ENCODE measurements at regions of chr12 and their contacts with region 1.

Region 1: DNA sequence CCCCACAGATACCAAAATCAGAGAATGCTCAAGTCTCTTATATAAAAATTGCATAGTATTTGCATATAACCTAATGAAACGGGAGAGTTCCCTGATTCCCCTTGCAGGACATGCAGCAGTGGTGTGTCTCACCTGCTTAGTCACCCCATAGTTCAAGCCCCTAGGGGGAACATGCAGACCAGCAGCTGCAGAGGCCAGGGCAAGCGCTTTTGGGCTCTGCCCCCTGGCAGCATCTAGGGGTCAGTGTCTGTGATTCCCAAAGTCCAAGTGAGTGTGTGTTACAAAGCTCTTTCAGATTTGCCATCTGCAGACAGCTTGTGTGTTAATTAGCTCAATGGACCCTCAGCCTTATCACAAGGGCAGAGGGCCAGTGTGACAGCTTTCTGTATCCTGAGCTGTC is 110.1 kb downstream of the DNAI7 start:
- DNase-seq: no peak
- ATAC-seq: no peak
- H3K4me3 ChIP-seq: no peak overlapping the region
- H3K27ac ChIP-seq: no peak overlapping the region
- H3K4me1 ChIP-seq: no peaks in the 10 kb centered on the region
- H3K27me3 ChIP-seq: no peaks in the 10 kb centered on the region
- CTCF ChIP-seq: no peak

Region 2: DNA sequence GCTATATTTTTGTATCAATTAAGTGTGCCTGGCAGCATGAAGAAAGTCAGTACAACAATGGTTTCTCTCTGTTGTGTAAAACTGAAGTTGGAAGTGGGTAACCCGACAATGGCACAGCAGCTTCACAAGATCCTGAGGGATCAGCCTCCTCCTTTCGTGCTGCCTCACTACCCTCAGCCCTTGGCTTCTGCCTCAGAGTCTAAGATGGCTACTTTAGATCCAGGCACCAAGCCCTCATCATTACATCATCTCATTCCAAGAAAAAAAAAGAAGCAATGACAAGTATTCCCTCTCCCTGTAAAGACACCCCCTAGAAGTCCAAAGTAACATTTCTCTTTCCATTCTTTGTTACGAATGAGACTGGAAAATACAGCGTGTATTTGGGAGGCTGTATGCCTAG is 17.6 kb after region 1 on chr12:
- intact Hi-C with region 1: loop called in 1 of 2 experiments (anchors 1 kb)
- DNase-seq: no peak
- ATAC-seq: no peak
- H3K4me3 ChIP-seq: no peak overlapping the region
- H3K27ac ChIP-seq: no peak overlapping the region
- H3K4me1 ChIP-seq: no peaks in the 10 kb centered on the region
- H3K27me3 ChIP-seq: no peaks in the 10 kb centered on the region
- CTCF ChIP-seq: no peak

Region 3: DNA sequence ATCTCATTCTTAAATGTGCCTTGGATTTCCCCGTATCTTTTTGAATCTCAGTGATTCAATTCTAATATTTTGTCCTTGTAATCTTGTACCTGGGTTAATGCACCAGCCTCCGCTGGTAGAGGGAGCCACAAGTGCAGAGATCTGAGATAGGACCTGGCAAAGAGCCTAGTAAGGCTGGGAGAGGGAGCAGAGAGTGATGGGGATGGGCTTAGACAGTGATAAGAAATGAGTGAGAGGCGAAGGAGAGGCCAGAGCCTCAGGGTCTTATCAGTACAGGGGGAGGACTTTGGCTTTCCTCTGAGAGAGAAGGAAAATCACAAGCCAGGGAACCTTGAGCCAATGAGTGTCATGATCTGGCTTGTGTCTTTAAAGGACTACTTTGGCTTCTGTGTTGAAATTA is 498.7 kb after region 1 on chr12:
- intact Hi-C with region 1: no loop called
- DNase-seq: no peak
- ATAC-seq: no peak
- H3K4me3 ChIP-seq: no peak overlapping the region
- H3K27ac ChIP-seq: no peak overlapping the region
- H3K4me1 ChIP-seq: no peaks in the 10 kb centered on the region
- H3K27me3 ChIP-seq: no peaks in the 10 kb centered on the region
- CTCF ChIP-seq: no peak

Measured in psoas muscle (tissue), 8 donors.